HAP-1 (cell line): ENCODE measurements at regions of chr5 and their contacts with region 1.

Region 1: GRCh38 chr5:122515709-122516431 is 203.8 kb downstream of the SNCAIP start:
- DNase-seq: peak; percentile 72 to 83
- H3K4me3 ChIP-seq: no peak overlapping the region
- H3K4me1 ChIP-seq: peaks cover 6% of the 10 kb centered on the region
- H3K27me3 ChIP-seq: no peaks in the 10 kb centered on the region; the same call in 1 of the 2 replicates

Region 2: GRCh38 chr5:122999945-123000563 is 484.2 kb after region 1 on chr5:
- in situ Hi-C with region 1: loop called (anchors 5 kb)
- DNase-seq: peak; percentile 77 to 87
- H3K4me3 ChIP-seq: no peak overlapping the region
- H3K4me1 ChIP-seq: peaks cover 18% of the 10 kb centered on the region
- H3K27me3 ChIP-seq: no peaks in the 10 kb centered on the region

Region 3: GRCh38 chr5:123344816-123345426 is 829.1 kb after region 1 on chr5:
- in situ Hi-C with region 1: loop called (anchors 25 kb)
- DNase-seq: peak; percentile 21 to 29
- H3K4me3 ChIP-seq: no peak overlapping the region
- H3K4me1 ChIP-seq: no peaks in the 10 kb centered on the region
- H3K27me3 ChIP-seq: no peaks in the 10 kb centered on the region

Region 4: GRCh38 chr5:123610665-123611405 is 1095.0 kb after region 1 on chr5:
- in situ Hi-C with region 1: loop called (anchors 25 kb)
- DNase-seq: peak; percentile 52 to 71
- H3K4me3 ChIP-seq: no peak overlapping the region
- H3K4me1 ChIP-seq: no peaks in the 10 kb centered on the region
- H3K27me3 ChIP-seq: no peaks in the 10 kb centered on the region